Left cardiac atrium (tissue), 4 donors: ENCODE measurements at regions of chr1 and their contacts with region 1.

Region 1: GRCh38 chr1:65148548-65149350 is 746 bp downstream of the AK4 start:
- DNase-seq: peak; percentile 51
- ATAC-seq: peak; percentile 68 to 83

Region 2: GRCh38 chr1:64948905-64949833 is 199.6 kb before region 1 on chr1:
- intact Hi-C with region 1: no loop called
- DNase-seq: no peak
- ATAC-seq: peak in 1 of 2 donors; percentile 47

Region 3: DNA sequence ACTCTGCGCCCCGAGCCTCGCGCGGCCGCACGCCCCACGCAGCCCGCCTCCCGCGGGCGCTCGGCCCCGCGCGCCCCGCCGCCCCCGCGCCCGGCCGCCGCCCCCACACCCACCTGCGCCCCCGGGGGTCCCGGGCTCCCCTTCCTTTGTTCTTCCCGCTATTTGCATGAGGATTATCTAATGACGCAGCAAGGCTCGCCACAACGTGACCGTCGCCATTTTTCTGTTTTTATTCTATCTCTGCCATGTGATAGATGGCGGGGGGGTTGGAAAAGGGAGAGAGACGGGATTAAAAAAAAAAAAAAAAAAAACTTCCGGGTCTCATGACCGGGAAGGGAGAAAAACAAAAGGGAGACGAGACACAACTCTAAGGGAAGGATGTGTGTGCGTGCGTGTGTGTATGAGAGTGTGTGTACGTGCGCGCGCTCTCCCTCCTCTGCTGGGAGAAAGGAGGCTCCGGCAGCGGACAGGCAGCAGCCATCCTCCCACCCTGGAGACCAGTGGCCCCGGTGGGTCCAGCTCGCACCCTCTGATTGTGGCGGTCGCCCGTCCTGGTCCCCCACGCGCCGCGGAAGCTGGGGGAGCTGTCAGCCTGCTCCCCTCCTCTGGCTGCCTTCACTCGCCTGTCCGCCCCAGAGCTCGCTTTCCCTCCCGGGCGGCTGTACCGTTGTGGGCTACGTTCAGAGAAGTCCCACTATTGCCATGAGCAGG is 81.1 kb before region 1 on chr1:
- intact Hi-C with region 1: loop called in 1 of 2 experiments (anchors 10 kb)
- DNase-seq: peak; percentile 74
- ATAC-seq: peak; percentile 38 to 39

Region 4: GRCh38 chr1:65297672-65298071 is 148.9 kb after region 1 on chr1:
- intact Hi-C with region 1: no loop called
- DNase-seq: no peak
- ATAC-seq: no peak